ENCODE measurements at regions of chr5 and their contacts with region 1.

Region 1: DNA sequence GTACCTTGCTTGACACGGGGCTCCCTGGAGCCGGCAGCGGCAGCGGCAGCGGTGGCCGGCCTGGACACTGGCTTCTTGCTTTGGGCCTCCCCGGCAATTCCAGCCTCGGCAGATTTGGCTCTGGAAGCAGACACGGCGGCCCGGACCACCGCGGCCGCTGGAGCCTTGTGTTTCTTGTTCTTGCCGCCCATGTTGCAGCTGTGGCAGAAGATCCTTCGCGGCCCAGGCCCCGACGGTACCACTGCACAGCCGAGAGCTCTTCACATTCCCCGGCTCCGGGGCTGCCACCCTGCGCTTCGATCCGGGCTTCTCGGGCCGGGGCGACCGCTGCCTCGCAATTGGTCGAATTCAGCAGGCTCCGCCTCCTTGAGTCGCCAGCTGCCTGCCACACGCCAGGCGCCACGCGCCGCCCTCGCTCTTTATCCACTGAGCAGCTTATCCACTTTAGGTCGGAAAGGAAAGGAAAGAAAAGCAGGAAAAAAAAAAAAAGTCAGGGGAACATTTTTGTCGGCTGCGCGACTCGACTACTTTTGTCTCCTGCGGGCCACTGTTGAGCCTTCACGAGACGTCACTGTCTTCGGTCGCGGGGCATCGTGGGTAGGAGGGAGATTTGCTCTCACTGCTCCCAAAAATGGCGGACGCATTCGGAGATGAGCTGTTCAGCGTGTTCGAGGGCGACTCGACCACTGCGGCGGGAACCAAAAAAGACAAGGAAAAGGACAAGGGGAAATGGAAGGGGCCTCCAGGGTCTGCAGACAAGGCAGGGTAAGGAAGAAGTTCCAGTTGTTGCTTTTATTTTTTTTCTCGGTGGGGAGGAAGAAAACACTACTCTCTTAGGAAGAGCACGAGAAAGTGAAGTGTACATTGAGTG is at the starts of genes DHX29 and MTREX:
- DNase-seq: peak; percentile 73 to 91 (median 83)
- ATAC-seq: peak; percentile 94 to 96 (median 95)
- H3K4me3 ChIP-seq: peak within 1 kb of the TSS; percentile 96 to 99
- H3K4me3 Mint-ChIP-seq: no peak within 1 kb of the TSS
- H3K27ac ChIP-seq: peak within 1 kb of the TSS; percentile 92
- H3K27ac Mint-ChIP-seq: no peak within 1 kb of the TSS
- H3K4me1 ChIP-seq: peaks cover 25 to 47% of the 10 kb centered on the region in 2 experiments
- H3K4me1 Mint-ChIP-seq: peaks cover 36 to 38% (median 36%) of the 10 kb centered on the region in 3 donors
- H3K27me3 ChIP-seq: no peaks in the 10 kb centered on the region
- H3K27me3 Mint-ChIP-seq: no peaks in the 10 kb centered on the region
- total RNA-seq, gene DHX29: 12.4 to 19.2 (median 15.4) TPM
- total RNA-seq, gene MTREX: 60.2 to 75.1 (median 62.0) TPM

Region 2: DNA sequence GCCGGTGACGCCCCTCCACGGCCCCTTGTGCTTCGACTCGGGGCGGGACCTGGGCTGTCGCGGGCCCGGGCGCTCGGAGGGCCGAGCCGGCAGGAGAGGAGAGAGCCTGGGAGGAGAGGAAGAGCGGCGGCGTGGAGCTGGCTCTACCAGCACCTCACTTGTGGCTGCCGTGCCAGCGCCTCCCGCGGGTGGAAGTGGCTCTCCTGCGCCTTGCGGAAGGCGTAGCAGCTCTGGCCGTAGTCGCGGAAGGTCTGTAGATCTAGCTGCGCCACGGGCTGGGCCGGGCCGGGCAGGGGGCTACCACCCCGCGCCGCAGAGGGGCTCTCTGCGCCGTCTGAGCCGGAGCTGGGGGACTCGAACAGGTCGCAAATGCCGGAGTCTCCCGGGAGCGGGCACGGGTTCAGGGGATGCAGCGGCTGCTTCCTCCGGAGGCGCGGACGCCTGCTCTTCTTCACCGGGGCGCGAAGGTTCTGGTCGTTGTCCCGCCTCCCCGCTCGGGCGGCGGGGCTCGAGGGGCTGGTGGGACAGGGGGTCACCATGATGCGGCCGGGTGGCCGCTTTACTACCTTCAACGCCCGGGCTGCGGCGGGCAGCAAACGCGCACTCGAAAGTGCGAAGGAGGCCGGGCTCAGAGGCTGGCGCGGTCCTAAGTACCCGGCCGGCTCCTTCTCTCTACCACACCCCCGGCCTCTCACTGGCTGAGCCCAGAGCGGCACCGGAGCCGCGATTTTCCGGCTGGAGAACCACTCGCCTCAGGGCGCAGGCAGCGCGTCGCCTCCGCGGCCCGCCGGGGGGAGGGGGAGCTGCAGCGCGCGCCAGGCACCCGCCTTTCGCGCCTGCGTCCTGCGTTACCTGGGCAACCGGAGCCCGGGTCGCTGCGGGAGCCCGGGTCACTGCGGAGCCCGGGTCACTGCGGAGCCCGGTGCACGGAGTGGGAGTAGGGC is 74.4 kb before region 1 on chr5 and contains the start of gene CCNO:
- CTCF ChIA-PET with region 1: no interaction called
- POLR2A ChIA-PET with region 1: no interaction called
- DNase-seq: peak in 29 of 35 experiments; percentile 24 to 70 (median 45)
- ATAC-seq: peak; percentile 69 to 79 (median 72)
- H3K4me3 ChIP-seq: peak within 1 kb of the TSS; percentile 56 to 88
- H3K4me3 Mint-ChIP-seq: peak within 1 kb of the TSS; percentile 81 to 97 (median 82)
- H3K27ac ChIP-seq: no peak within 1 kb of the TSS
- H3K27ac Mint-ChIP-seq: no peak within 1 kb of the TSS
- H3K4me1 ChIP-seq: peaks cover 16 to 39% of the 10 kb centered on the region in 2 experiments
- H3K4me1 Mint-ChIP-seq: peaks cover 21 to 32% (median 32%) of the 10 kb centered on the region in 3 donors
- H3K27me3 ChIP-seq: peaks cover 35 to 82% of the 10 kb centered on the region in 2 experiments
- H3K27me3 Mint-ChIP-seq: peaks cover 62 to 77% of the 10 kb centered on the region in 2 donors
- total RNA-seq, gene CCNO: 0.20 TPM in 1 of 5 donors, not detected in the others

Region 3: GRCh38 chr5:55338810-55339243 is 31.2 kb after region 1 on chr5:
- CTCF ChIA-PET with region 1: interaction called in 1 of 2 experiments, 3 read pairs
- POLR2A ChIA-PET with region 1: interaction called in 1 of 2 experiments, 16 read pairs
- DNase-seq: no peak
- ATAC-seq: no peak
- H3K4me3 ChIP-seq: no peak overlapping the region
- H3K4me3 Mint-ChIP-seq: peak overlapping the region in 1 of 3 donors; percentile 21
- H3K27ac ChIP-seq: no peak overlapping the region
- H3K27ac Mint-ChIP-seq: peak overlapping the region in 1 of 2 donors; percentile 48
- H3K4me1 ChIP-seq: peaks cover 3 to 4% of the 10 kb centered on the region in 2 experiments
- H3K4me1 Mint-ChIP-seq: peaks cover 23 to 32% (median 28%) of the 10 kb centered on the region in 3 donors
- H3K27me3 ChIP-seq: no peaks in the 10 kb centered on the region
- H3K27me3 Mint-ChIP-seq: no peaks in the 10 kb centered on the region